A673 (cell line): ENCODE measurements at regions of chr11 and their contacts with region 1.

Region 1: DNA sequence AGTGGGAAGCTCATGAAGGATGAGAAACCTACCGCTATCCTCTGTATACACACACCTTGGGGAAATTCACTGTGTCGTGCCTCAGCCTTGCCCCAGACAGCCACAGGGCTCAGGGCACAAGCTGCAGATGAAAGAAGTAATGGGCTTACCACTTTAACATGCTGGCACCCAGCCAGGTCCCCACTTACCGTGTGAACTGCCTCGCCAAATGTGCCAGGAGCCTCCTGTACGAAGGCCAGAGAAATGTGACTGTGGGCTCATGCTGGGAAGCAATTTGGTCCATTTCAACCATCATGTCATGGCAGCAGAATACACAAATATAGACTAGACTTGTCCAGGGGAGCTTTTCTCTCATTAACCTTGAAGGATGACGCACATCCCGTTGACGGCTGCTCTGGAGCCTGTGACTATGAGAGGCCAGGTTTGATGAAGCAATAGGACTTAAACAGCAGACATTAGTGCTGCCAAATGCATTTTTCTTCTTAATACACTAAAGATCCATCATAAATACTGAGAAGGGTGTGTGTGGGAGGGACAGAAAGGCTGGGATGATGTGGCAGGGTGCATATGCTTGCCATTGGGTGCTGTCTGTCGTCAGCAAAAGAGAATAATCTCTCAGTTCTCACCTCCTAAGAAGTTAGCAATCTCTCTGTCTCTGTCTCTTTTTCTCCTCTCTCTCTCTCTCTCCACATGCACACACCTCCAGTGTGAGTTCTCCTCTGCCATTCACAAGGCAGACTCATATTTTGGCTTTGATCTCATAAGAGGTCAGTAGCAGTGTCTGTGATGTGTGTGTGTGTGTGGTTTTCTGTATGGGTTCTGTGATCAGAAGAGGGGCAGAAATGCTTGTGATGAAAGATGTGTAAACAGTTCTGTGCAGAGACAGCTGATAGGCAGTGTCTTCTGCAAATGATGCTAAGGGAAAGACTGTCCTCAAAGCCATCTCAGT is 142.4 kb downstream of the KIRREL3 start:
- DNase-seq: peak; percentile 18
- H3K4me3 ChIP-seq: no peak overlapping the region
- H3K27ac ChIP-seq: no peak overlapping the region
- H3K4me1 ChIP-seq: no peaks in the 10 kb centered on the region
- H3K27me3 ChIP-seq: peaks cover 10% of the 10 kb centered on the region
- CTCF ChIP-seq: no peak

Region 2: DNA sequence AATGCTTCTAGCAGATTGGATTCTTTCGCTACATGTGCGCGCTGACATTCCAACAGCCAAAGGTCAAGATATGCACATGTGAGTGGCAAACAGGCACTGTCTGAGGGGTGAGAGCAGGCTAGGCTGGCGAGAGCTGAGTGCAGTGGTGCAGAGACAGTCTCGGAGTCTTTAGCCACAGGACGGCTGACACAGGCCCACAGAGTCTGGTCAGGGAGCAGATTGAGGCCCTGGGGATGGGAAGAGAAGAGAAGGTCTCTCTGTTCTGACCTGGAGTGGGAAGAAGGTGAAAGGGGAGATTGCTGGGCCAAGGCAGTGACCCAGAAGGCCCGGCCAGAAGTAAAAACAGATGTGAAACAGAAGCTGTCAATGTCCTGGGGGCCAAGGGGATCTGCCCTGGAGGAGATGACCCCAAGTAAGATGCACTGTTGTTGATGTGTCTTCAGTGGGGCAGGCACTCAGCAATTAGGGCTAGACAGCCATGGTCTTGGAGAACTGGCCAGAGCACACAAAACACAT is 1531.4 kb after region 1 on chr11:
- CTCF ChIA-PET with region 1: no interaction called
- POLR2A ChIA-PET with region 1: interaction called, 10 read pairs
- intact Hi-C with region 1: no loop called
- DNase-seq: no peak
- H3K4me3 ChIP-seq: no peak overlapping the region
- H3K27ac ChIP-seq: no peak overlapping the region
- H3K4me1 ChIP-seq: no peaks in the 10 kb centered on the region
- H3K27me3 ChIP-seq: peaks cover under 1% of the 10 kb centered on the region
- CTCF ChIP-seq: no peak